WTC11 (cell line): ENCODE measurements at regions of chr7 and their contacts with region 1.

Region 1: GRCh38 chr7:157394246-157395191 is 57.7 kb downstream of the DNAJB6 start:
- DNase-seq: no peak
- ATAC-seq: no peak
- H3K4me3 Mint-ChIP-seq: no peak overlapping the region
- H3K27ac Mint-ChIP-seq: peak overlapping the region; percentile 92
- H3K4me1 Mint-ChIP-seq: peaks cover 37% of the 10 kb centered on the region
- H3K27me3 Mint-ChIP-seq: no peaks in the 10 kb centered on the region
- CTCF ChIP-seq: no peak

Region 2: DNA sequence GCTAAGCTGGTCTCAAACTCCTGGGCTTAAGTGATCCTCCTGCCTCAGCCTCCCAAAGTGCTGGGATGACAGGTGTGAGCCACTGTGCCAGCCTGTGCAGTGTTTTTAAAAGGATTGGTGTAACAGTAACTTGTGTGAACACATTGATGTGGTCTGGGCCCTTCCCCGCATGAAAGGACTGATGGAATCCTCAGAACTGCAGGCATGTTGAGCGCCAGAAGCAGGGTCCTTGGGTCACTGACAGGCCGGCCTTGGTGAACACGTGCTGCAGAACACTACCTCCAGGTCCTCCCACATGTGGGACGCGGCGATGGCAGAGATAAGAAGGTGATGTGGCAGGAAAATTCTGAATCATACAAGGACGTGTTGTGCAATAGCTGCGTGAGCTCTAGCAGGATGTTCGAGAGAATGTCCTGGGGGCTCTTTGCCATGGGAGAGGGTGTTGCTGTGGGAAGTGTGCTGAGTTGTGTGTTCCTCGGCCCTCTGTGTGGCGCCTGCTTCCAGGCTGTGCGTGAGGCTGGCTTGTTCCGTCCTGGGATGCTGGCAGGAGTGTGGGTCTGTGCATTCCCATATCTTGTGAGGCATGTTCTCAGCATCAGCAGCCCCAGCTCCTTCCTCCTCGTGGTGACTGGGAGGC is 10.4 kb after region 1 on chr7:
- CTCF ChIA-PET with region 1: interaction called, 15 read pairs
- POLR2A ChIA-PET with region 1: interaction called, 4 read pairs
- DNase-seq: no peak
- ATAC-seq: no peak
- H3K4me3 Mint-ChIP-seq: no peak overlapping the region
- H3K27ac Mint-ChIP-seq: peak overlapping the region; percentile 89; the same call in 1 of the 2 replicates
- H3K4me1 Mint-ChIP-seq: peaks cover 22% of the 10 kb centered on the region
- H3K27me3 Mint-ChIP-seq: no peaks in the 10 kb centered on the region
- CTCF ChIP-seq: no peak